PC-3 (cell line): ENCODE measurements at regions of chr5 and their contacts with region 1.

Region 1: GRCh38 chr5:148306446-148306845 is 5.8 kb upstream of the SPINK7 start:
- DNase-seq: peak; percentile 42
- ATAC-seq: peak; percentile 90
- H3K4me3 ChIP-seq: no peak overlapping the region
- H3K27ac ChIP-seq: no peak overlapping the region
- H3K4me1 ChIP-seq: no peaks in the 10 kb centered on the region; the same call in 1 of the 2 replicates
- H3K27me3 ChIP-seq: no peaks in the 10 kb centered on the region
- CTCF ChIP-seq: peak; percentile 55

Region 2: DNA sequence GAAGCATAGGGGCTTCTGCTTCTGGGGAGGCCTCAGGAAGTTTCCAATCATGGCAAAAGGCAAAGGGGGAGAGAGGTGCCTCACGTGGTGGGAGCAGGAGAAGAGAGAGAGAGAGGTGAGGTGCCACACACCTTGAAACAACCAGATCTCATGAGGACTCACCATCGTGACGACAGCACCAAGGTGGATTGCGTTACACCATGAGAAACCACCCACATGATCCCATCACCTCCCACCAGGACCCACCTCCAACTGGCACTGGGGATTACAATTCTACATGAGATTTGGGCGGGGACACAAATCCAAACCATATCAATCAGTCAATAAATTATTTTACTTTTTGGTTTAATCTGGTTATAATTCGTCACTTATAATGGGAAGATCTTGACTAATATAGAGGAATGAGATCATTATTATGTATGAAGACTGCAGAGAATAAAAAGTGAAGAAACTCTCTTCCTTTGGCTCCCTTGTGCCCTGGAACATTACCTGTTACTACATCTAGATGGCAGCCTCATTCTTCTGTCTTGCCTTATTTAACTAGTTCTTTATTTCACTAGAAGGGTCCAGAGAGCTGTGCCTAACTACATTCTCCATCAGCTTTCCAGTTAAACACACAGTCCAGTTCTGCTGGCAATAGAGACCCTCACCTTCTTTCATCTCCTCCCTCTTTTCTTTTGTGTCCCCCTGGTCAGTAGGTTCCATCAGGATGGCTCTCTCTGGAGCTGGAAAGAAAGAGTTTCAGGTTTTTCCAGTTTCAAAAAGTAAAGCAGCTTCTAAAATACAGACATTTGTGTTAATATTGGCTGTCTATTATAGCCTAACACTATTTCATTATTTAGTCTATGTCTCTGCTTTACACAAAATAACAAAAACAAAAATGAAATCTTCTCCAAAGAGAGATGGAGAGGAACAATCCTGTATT is 15.9 kb before region 1 on chr5:
- CTCF ChIA-PET with region 1: interaction called, 4 read pairs
- POLR2A ChIA-PET with region 1: no interaction called
- intact Hi-C with region 1: loop called (anchors 2 kb)
- DNase-seq: peak; percentile 66
- ATAC-seq: peak; percentile 90
- H3K4me3 ChIP-seq: no peak overlapping the region
- H3K27ac ChIP-seq: no peak overlapping the region
- H3K4me1 ChIP-seq: no peaks in the 10 kb centered on the region
- H3K27me3 ChIP-seq: no peaks in the 10 kb centered on the region
- CTCF ChIP-seq: peak; percentile 92